ENCODE measurements at regions of chr11 and their contacts with region 1.

Region 1: GRCh38 chr11:122853971-122854446 is 15.7 kb downstream of the CRTAM start:
- DNase-seq: peak; percentile 42
- H3K4me3 ChIP-seq: no peak overlapping the region
- CTCF ChIP-seq: peak; percentile 29

Region 2: DNA sequence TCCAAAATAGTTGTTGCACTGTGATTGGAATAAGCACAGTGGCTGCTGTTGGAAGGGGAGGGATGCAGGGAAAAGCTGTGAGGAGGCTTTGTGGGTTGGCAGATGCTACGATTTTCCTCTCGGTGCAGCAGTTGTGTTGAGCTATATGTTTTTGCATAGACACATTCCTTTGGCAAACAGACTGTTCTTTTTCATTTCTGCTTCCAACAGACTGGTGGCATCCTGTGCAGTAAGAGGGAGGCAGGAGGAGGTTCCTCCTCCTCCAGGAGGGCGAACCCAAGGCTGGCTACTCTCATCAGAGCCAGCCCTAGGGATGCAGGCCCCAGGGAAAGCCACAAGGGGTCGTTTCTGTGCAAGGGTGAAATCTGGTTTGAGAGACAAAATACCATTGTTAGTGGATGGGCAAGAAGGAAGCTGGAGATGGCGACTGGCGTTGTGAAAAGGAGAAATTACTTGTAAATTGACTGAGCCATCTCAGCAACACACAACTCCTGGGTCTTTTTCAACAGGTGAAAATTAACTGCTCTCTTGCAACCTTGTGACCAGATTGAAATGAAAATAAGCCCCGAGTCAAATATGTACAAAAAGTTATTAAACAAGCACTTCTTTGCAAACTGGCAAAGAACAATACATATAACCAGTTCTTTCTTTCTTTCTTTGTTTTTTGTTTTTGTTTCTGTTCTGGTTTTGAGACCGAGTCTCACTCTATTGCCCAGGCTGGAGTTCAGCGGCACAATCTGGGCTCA is 225.0 kb before region 1 on chr11:
- CTCF ChIA-PET with region 1: interaction called, 524 read pairs
- POLR2A ChIA-PET with region 1: interaction called, 3 read pairs
- DNase-seq: no peak
- H3K4me3 ChIP-seq: no peak overlapping the region
- CTCF ChIP-seq: peak; percentile 89

Region 3: DNA sequence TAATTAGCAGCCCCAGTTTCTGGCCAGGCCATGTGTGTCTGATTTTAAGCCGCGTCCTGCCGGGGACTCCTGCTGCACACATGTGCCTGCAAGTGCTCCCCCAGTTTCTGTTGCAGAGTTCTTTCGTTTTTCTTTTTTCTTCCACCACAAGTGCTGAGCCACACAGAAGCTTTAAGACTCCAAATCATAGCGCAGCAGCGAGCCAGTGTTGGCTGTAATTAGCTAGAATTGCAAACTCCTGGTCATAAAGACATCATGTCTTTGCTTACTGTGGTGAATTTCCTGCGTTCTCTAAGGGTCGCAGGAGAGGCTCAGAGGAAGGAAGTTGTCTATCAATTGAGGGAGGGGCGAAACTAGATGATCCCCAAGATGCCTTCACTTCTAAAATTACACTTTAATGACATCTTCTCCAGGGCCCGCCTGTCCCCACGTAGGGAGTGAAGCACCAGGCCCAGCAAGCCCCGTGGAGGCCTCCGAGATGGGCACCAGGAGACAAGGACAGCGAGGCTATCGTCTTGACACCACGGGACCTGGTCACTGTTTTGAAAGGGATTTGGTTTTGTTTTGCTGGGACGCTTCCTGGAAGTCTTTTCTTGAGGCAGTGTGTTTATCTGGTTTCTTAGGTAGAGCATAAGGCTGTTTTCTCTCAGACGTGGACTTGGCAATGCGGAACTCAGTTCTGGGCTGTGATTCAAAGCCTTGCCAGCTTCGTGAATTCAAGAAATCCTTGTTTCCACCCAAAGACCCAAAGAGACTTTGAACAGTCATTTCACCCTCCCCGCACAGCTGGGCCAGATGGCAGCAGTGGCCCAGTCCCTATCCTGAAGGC is 126.7 kb before region 1 on chr11:
- CTCF ChIA-PET with region 1: no interaction called
- POLR2A ChIA-PET with region 1: no interaction called
- DNase-seq: no peak
- H3K4me3 ChIP-seq: peak overlapping the region; percentile 21
- CTCF ChIP-seq: no peak

Region 4: GRCh38 chr11:122788781-122789535 is 65.1 kb before region 1 on chr11:
- CTCF ChIA-PET with region 1: interaction called, 152 read pairs
- POLR2A ChIA-PET with region 1: no interaction called
- DNase-seq: no peak
- H3K4me3 ChIP-seq: no peak overlapping the region
- CTCF ChIP-seq: no peak

Region 5: GRCh38 chr11:122814401-122814800 is 39.6 kb before region 1 on chr11:
- CTCF ChIA-PET with region 1: interaction called, 23 read pairs
- POLR2A ChIA-PET with region 1: no interaction called
- DNase-seq: no peak
- H3K4me3 ChIP-seq: no peak overlapping the region
- CTCF ChIP-seq: no peak

Region 6: GRCh38 chr11:122843281-122844141 is 10.5 kb before region 1 on chr11:
- CTCF ChIA-PET with region 1: interaction called, 33 read pairs
- POLR2A ChIA-PET with region 1: no interaction called
- DNase-seq: no peak
- H3K4me3 ChIP-seq: no peak overlapping the region
- CTCF ChIP-seq: no peak

Region 7: DNA sequence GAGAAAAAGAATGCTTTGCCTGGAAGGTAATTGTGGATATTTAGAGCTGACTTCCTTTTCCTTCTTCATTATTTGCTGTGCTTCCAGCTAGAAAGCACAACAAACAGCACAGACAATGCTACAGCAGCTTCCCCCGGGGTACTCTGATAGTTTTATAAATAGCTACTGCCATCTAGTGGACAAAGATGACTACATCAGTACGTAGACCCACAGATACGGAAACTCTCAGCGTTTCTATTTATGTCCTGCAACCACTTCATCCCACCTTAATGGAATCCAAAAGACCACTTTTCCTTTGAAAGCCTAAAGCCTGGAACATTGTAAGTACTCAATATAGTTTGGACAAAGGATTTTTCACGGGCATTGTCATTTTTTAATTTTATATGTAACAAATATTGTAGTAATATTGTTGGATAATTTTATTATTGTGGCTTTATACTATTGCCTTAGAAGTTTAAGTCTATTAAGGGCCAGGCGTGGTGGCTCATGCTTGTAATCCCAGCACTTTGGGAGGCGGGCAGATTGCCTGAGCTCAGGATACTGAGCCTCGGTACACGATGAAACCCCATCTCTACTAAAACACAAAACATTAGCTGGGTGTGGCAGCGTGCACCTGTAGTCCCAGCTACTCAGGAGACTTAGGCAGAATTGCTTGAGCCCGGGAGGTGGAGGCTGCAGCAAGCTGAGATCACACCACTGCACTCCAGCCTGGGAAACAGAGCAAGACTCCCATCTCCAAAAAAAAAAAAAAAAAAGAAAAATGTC is 200.5 kb after region 1 on chr11:
- CTCF ChIA-PET with region 1: interaction called, 12 read pairs
- POLR2A ChIA-PET with region 1: no interaction called
- DNase-seq: no peak
- H3K4me3 ChIP-seq: no peak overlapping the region
- CTCF ChIP-seq: peak; percentile 58